Activated CD4-positive, alpha-beta T cell treated with anti-CD3 and anti-CD28 coated beads, Interleukin-2, amount 10 ng/mL, durations not matched to agents 24 days and 14 days (primary cell): ENCODE measurements at regions of chr5 and their contacts with region 1.

Region 1: DNA sequence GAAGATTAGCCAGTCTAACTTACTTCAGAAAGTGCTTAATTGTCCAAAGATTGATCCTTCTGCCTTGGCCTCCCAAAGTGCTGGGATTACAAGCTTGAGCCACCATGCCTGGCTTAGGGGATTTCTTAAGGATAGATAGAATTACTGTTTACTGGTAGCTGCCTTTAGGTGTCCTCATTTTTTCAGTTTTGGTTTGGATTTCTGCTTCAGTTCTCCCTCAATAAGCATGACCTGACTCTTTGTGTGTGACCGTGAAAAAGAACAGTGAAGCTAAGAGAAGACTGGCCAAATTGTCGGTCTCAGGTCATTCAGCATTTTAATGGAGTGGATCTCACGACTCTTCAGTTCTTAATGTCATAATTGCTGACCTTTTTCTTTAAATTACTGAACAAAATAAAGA is 22.9 kb upstream of the CMYA5 start:
- DNase-seq: no peak
- H3K4me3 Mint-ChIP-seq: no peak overlapping the region
- H3K27ac Mint-ChIP-seq: no peak overlapping the region
- H3K4me1 Mint-ChIP-seq: peaks cover 12% of the 10 kb centered on the region
- H3K27me3 Mint-ChIP-seq: no peaks in the 10 kb centered on the region

Region 2: DNA sequence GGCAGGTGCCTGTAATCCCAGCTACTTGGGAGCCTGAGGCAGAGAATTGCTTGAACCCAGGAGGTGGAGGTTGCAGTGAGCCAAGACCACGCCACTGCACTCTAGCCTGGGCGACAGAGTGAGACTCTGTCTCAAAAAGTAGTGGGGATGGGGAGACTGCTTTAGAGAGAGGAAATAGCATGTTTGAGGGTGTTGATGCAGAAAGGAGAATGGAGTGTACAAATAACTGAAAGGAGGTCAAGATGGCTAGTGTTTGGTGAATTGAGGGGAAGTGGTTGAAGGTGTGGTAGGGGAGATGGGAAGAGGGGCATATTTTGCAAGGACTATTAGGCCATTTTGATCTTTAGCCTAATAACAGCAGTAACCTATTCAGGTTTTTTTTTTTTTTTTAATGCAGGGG is 36.3 kb before region 1 on chr5:
- intact Hi-C with region 1: loop called (anchors 5 kb)
- DNase-seq: no peak
- H3K4me3 Mint-ChIP-seq: no peak overlapping the region
- H3K27ac Mint-ChIP-seq: peak overlapping the region; percentile 3
- H3K4me1 Mint-ChIP-seq: peaks cover 18% of the 10 kb centered on the region
- H3K27me3 Mint-ChIP-seq: no peaks in the 10 kb centered on the region

Region 3: DNA sequence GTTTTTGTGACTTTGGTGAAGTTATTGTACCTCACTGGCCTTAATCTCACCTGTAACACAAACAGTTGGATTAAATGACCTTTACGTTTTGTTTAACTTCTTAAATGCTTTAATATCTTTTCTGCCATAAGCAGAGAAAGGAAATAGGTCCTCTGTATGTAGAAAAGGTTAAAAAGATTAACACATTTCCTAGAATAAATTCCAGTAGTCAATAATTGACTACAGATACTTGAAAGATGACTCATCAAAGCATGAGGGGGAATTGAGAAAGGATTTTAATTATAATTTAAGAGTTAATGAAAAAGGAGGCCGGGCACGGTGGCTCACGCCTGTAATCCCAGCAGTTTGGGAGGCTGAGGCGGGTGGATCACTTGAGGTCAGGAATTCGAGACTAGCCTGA is 12.9 kb before region 1 on chr5:
- intact Hi-C with region 1: no loop called
- DNase-seq: no peak
- H3K4me3 Mint-ChIP-seq: no peak overlapping the region
- H3K27ac Mint-ChIP-seq: no peak overlapping the region
- H3K4me1 Mint-ChIP-seq: no peaks in the 10 kb centered on the region
- H3K27me3 Mint-ChIP-seq: no peaks in the 10 kb centered on the region